ENCODE measurements at regions of chr3 and their contacts with region 1.

Region 1: GRCh38 chr3:122383771-122384697 is at the start of gene FAM162A:
- DNase-seq: peak; percentile 89 to 97 (median 94)
- H3K4me3 ChIP-seq: peak within 1 kb of the TSS; percentile 52 to 97 (median 83)
- H3K27ac ChIP-seq: peak within 1 kb of the TSS; percentile 74 to 97 (median 91)
- H3K27me3 ChIP-seq: no peaks in the 10 kb centered on the region
- CTCF ChIP-seq: peak; percentile 54 to 95 (median 85)
- total RNA-seq, gene FAM162A: 26.1 to 101 (median 59.2) TPM

Region 2: GRCh38 chr3:122415720-122416654 is 32.0 kb after region 1 on chr3 and contains the start of gene WDR5B:
- intact Hi-C with region 1: loop called in 1 of 2 experiments (anchors 2 kb)
- DNase-seq: peak; percentile 95 to 98 (median 98)
- H3K4me3 ChIP-seq: peak within 1 kb of the TSS; percentile 48 to 98 (median 86)
- H3K27ac ChIP-seq: peak within 1 kb of the TSS; percentile 47 to 98 (median 91)
- H3K27me3 ChIP-seq: no peaks in the 10 kb centered on the region
- CTCF ChIP-seq: peak in 35 of 56 donors; percentile 9 to 58 (median 29)
- total RNA-seq, gene WDR5B: 1.2 to 7.1 (median 3.7) TPM

Region 3: GRCh38 chr3:122514123-122515019 is 130.3 kb after region 1 on chr3 and contains the start of gene KPNA1:
- intact Hi-C with region 1: loop called in 1 of 2 experiments (anchors 5 kb)
- DNase-seq: peak; percentile 72 to 95 (median 84)
- H3K4me3 ChIP-seq: peak within 1 kb of the TSS; percentile 62 to 92 (median 83)
- H3K27ac ChIP-seq: peak within 1 kb of the TSS; percentile 51 to 99 (median 93)
- H3K27me3 ChIP-seq: no peaks in the 10 kb centered on the region
- CTCF ChIP-seq: peak in 27 of 56 donors; percentile 4 to 53 (median 25)
- total RNA-seq, gene KPNA1: 54.6 to 126 (median 91.1) TPM

Region 4: DNA sequence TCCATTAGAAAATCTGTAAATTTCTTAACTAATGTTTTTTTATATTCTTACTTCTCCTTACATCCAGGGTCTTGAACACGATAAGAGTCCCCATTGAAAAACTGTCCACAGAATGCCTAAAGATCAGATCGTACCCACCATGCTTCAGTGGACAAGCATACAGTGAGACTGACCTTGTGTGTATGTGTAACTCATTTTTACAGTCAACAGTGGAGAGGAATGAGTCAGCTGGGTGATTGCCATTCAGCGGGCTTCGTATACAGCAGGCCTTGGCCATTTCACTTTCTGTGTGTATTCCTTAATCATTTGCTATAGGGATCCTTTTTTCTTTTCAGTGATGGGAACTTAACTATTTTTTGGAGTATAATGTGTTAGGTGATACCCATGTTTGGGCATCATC is 307.2 kb after region 1 on chr3:
- intact Hi-C with region 1: no loop called
- DNase-seq: no peak
- H3K4me3 ChIP-seq: no peak overlapping the region
- H3K27ac ChIP-seq: no peak overlapping the region
- H3K27me3 ChIP-seq: no peaks in the 10 kb centered on the region
- CTCF ChIP-seq: no peak

Measured in dorsolateral prefrontal cortex (tissue), 120 donors.